ENCODE measurements at regions of chr12 and their contacts with region 1.

Region 1: DNA sequence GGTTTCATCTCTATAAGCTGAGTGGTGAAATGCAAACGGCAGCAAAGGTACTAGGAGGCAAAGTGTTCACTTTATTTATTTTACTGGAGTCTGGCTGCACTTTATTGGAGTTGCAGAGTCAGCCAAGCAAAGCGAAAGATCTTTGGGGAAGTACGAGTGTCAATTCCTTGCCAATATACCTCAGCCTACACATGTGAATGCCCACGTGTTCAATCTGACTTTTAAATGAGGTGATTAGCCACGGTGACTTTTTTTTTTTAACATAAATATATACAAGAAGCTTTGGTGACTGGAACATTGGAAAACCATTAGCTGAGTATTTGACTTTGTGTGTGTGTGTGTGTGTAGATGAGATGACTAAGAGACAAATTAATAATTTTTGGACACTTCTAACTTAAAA is 178.8 kb downstream of the NTS start:
- DNase-seq: no peak
- H3K4me3 ChIP-seq: no peak overlapping the region
- H3K27ac ChIP-seq: no peak overlapping the region
- H3K4me1 ChIP-seq: no peaks in the 10 kb centered on the region
- H3K27me3 ChIP-seq: no peaks in the 10 kb centered on the region
- CTCF ChIP-seq: no peak

Region 2: GRCh38 chr12:86213012-86213411 is 160.1 kb after region 1 on chr12:
- CTCF ChIA-PET with region 1: no interaction called
- dilution Hi-C with region 1: no loop called
- in situ Hi-C with region 1: loop called in 1 of 2 experiments (anchors 25 kb)
- intact Hi-C with region 1: no loop called
- DNase-seq: no peak
- H3K4me3 ChIP-seq: no peak overlapping the region
- H3K27ac ChIP-seq: no peak overlapping the region
- H3K4me1 ChIP-seq: no peaks in the 10 kb centered on the region
- H3K27me3 ChIP-seq: no peaks in the 10 kb centered on the region
- CTCF ChIP-seq: no peak